Breast epithelium (tissue), 4 donors: ENCODE measurements at regions of chr10 and their contacts with region 1.

Region 1: DNA sequence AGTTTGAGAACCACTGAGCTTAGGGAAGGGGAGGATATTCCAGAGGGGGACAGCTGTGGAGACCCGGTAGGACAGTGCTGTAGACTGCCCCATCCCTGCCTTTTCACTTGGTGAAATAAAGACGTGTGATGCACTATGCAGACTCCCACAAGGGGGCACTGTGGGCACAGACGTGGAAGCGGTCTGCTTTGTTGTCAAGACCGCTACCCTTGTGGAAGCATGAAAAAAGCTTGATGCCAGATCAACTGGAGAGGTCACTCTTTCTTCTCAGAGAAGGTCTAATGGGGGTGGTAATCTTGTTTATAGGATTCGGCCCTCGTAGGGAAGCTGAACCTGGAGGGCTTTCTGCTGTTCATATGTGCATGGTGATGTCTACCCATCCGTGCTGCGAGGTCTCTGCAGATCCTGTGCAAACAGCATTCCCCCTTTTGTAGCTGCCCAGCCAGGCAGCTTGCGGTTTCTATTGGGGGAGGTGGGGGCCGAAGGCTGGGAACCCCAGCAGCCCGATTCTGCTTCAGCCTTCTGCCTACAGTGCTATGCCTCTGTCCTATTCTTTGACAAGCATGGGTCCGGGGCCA is 13.7 kb downstream of the RPS24 start:
- DNase-seq: peak; percentile 73 to 91
- H3K4me3 ChIP-seq: no peak overlapping the region
- H3K27ac ChIP-seq: no peak overlapping the region
- H3K4me1 ChIP-seq: no peaks in the 10 kb centered on the region
- H3K27me3 ChIP-seq: no peaks in the 10 kb centered on the region
- CTCF ChIP-seq: peak; percentile 62 to 93 (median 91)
- POLR2A ChIP-seq: no peak

Region 2: DNA sequence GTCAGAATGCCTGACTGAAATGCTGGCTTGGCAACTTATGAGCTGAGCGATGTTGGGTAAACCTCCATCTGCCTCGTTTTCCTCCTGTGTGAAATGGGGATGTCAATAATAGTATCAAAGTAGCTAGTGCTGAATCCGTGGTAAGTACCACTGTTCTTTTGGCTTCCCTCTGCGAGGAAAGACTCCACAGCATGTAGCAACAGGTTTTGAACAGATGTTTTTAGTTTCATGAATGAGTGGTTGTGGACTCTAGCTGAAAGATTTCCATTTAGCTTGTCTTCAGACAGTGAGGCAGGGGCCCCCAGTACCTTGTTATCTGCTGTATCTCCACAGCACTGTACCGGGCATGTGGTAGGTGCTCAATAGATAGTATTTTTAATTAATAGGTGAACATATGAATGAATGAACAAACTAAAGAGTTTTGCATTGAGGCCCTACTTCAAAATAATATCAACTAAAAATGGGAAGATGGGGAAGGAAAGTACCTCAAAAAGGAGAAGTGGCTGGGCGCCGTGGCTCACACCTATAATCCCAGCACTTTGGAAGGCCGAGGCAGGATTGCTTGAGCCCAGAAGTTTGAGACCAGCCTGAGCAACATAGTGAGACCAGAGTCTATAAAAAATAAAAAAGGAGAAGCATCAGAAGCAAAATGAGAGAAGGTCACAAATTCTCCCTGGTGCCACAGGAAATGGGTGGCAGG is 115.2 kb before region 1 on chr10:
- intact Hi-C with region 1: no loop called
- DNase-seq: no peak
- H3K4me3 ChIP-seq: no peak overlapping the region
- H3K27ac ChIP-seq: no peak overlapping the region
- H3K4me1 ChIP-seq: no peaks in the 10 kb centered on the region
- H3K27me3 ChIP-seq: no peaks in the 10 kb centered on the region
- CTCF ChIP-seq: no peak
- POLR2A ChIP-seq: no peak

Region 3: GRCh38 chr10:79184145-79184625 is 1136.8 kb after region 1 on chr10:
- intact Hi-C with region 1: loop called (anchors 10 kb)
- DNase-seq: no peak
- H3K4me3 ChIP-seq: no peak overlapping the region
- H3K27ac ChIP-seq: peak overlapping the region; percentile 66 to 67
- H3K4me1 ChIP-seq: peaks cover 4 to 12% of the 10 kb centered on the region in 2 donors
- H3K27me3 ChIP-seq: no peaks in the 10 kb centered on the region
- CTCF ChIP-seq: no peak
- POLR2A ChIP-seq: no peak